ENCODE measurements at regions of chr1 and their contacts with region 1.

Region 1: GRCh38 chr1:248622570-248623001 is 12.3 kb downstream of the OR2T11 start:
- DNase-seq: no peak
- H3K4me3 ChIP-seq: no peak overlapping the region
- H3K27me3 ChIP-seq: no peaks in the 10 kb centered on the region
- CTCF ChIP-seq: peak; percentile 55

Region 2: DNA sequence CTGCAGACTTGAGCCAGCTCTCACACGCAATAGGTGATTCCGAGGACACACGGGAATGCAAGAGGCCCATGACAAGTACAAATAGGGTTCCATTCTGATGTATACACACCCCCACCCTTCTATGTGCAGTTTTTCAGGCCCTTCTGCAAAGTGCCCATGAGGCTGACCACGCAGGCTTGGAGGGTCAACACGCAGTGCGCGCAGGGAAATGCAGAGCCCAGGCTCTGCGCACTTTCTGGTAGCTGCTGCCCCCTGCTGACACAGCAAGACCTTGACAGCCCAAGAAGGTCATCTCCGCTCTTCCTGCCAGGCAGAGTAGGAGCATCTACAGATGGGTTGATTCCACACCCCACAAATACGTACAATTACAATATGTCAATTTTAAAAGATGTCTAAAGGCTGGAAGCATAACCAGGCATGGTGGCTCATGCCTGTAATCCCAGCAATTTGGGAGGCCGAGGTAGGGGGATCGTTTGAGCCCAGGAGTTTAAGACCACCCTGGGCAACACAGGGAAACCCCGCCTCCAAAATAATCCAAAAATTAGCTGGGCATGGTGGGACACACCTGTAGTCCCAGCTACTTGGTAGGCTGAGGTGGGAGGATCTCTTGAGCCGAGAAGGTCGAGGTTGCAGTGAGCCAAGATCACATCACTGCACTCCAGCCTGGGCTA is 184.6 kb after region 1 on chr1:
- CTCF ChIA-PET with region 1: interaction called, 39 read pairs
- POLR2A ChIA-PET with region 1: no interaction called
- DNase-seq: no peak
- H3K4me3 ChIP-seq: no peak overlapping the region
- H3K27me3 ChIP-seq: no peaks in the 10 kb centered on the region; the same call in 1 of the 2 replicates
- CTCF ChIP-seq: peak; percentile 72